B cell (primary cell): ENCODE measurements at regions of chr16 and their contacts with region 1.

Region 1: DNA sequence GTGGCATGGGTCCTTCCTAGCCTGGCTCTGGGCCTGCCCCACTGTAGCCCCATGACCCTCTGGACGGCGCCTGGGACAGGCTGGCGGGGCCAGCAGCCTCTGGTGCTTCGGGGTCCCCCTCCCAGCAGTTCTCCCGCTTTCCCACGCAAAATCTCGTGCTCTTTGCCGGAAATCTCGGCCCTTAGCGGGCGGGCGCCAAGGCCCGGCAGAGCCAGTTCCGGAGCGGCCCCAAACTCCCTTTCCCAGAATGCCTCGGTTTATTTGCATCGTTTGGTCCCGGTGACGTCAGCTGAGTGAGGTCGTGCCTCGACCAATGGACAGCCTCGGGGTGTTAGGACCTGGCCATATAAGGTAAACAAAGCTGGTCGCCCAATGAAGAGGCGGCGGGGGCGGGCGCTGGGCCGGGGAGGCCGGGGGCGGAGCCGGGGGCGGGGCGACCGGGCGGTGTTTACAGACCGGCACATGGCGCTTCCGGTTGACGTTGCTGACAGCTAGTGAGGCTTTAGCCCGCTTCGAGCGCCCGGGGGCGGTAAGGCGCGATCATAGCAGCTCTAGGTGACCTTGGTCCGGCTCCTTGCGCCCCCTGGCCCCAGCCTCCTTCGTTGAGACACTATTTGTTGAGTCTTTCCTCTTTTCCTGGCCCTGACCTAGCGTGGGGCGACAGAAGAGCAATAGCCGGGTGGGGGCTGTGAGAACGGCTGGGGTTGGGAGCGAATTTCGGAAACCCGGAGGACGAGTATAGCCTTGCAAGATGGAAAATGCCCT is 1.5 kb upstream of the UBALD1 start:
- DNase-seq: peak; percentile 99
- ATAC-seq: peak; percentile 84
- H3K4me3 ChIP-seq: peak overlapping the region; percentile 4 to 81 (median 55)
- H3K4me3 Mint-ChIP-seq: peak overlapping the region; percentile 92
- H3K27ac ChIP-seq: peak overlapping the region; percentile 86 to 96
- H3K27ac Mint-ChIP-seq: peak overlapping the region; percentile 92
- H3K4me1 ChIP-seq: peaks cover 28 to 39% of the 10 kb centered on the region in 2 donors
- H3K4me1 Mint-ChIP-seq: peaks cover 29% of the 10 kb centered on the region
- H3K27me3 ChIP-seq: no peaks in the 10 kb centered on the region
- H3K27me3 Mint-ChIP-seq: no peaks in the 10 kb centered on the region
- CTCF ChIP-seq: peak; percentile 64

Region 2: DNA sequence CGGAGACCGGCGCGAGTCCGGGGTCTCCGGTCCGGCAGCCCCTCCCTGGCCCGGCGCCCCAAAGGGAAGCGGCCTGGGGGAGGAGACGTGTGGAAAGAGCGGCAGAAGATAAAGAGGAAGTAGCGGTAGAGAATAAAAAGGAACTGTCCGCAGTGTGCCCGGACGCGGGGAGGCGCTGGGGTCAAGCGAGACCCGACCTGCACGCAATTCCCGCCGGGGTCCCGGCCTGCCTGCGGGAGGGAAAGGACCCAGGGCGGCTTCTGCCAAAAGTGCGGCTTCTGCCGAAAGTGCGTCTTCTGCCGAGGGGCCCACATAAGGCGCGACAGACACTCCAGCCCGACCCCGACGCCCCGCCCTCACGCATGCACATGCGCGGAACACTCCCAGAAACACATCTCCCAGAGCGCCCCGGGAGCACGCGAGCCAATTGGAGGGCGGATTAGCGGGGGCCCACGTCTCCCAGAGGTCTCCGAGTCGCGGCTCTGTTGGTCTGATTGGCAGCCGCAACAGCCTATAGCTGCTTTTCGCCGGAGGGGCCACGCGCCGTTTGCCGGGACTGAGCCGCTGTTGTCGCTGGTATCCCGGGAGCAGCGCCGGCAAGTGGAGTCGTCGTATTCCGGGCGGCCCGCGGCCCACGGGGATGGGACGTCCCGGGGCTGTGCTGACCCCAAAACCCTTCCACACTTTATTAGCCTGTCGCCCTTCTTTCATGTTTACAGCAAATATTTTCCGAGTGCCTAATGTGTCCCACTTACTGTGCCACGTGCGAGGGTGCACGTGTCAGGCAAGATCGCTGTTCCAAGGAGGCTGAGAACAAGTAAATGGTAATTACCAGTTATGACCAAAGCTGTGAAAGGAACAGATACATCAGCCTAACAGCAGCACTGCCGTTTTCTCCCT is 1351.8 kb before region 1 on chr16:
- CTCF ChIA-PET with region 1: no interaction called
- POLR2A ChIA-PET with region 1: no interaction called
- intact Hi-C with region 1: loop called (anchors 10 kb)
- DNase-seq: peak; percentile 97
- ATAC-seq: peak; percentile 86
- H3K4me3 ChIP-seq: peak overlapping the region; percentile 75 to 84 (median 78)
- H3K4me3 Mint-ChIP-seq: peak overlapping the region; percentile 92
- H3K27ac ChIP-seq: peak overlapping the region; percentile 85 to 86
- H3K27ac Mint-ChIP-seq: peak overlapping the region; percentile 95
- H3K4me1 ChIP-seq: peaks cover 9 to 18% of the 10 kb centered on the region in 2 donors
- H3K4me1 Mint-ChIP-seq: peaks cover 28% of the 10 kb centered on the region
- H3K27me3 ChIP-seq: no peaks in the 10 kb centered on the region
- H3K27me3 Mint-ChIP-seq: no peaks in the 10 kb centered on the region
- CTCF ChIP-seq: peak; percentile 54

Region 3: GRCh38 chr16:4116337-4117249 is 499.6 kb before region 1 on chr16 and contains the start of gene ADCY9:
- CTCF ChIA-PET with region 1: no interaction called
- POLR2A ChIA-PET with region 1: no interaction called
- intact Hi-C with region 1: loop called (anchors 10 kb)
- DNase-seq: peak; percentile 88
- ATAC-seq: peak; percentile 86
- H3K4me3 ChIP-seq: peak within 1 kb of the TSS in 4 of 5 experiments; percentile 46 to 75 (median 58)
- H3K4me3 Mint-ChIP-seq: peak within 1 kb of the TSS; percentile 91
- H3K27ac ChIP-seq: no peak within 1 kb of the TSS
- H3K27ac Mint-ChIP-seq: peak within 1 kb of the TSS; percentile 64
- H3K4me1 ChIP-seq: peaks cover 10 to 13% of the 10 kb centered on the region in 2 donors
- H3K4me1 Mint-ChIP-seq: peaks cover 18% of the 10 kb centered on the region
- H3K27me3 ChIP-seq: peaks cover 0 to 6% (median 0%) of the 10 kb centered on the region in 4 experiments
- H3K27me3 Mint-ChIP-seq: peaks cover 22% of the 10 kb centered on the region
- CTCF ChIP-seq: no peak
- total RNA-seq, gene ADCY9: 1.7 and 1.9 TPM in 2 replicates

Region 4: DNA sequence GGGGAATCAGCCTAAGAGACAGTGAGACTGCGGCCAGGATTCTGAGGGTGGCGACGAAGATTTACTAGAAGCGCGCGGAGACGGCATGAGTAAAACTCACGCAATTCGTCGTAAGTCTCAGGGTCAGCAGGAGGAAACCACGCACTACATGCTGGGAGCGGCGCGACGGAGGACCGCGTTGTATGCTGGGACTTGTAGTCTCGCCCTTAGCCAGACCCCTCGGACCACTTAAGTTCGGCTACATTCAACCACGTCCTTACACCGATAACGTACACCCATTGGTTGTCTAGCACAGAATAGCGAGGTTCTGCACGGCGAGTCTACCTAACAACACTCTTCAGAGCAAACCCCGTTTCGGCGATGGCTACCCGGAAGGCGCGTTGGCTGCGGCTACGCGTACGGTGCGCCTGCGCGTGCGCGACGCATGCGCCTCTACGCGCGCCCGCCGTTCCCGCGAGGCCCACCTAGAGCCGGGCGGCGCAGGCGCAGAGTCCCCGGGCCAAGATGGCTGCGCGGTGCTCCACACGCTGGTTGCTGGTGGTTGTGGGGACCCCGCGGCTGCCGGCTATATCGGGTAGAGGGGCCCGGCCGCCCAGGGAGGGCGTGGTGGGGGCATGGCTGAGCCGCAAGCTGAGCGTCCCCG is 190.7 kb before region 1 on chr16 and contains the start of gene DNAJA3:
- CTCF ChIA-PET with region 1: no interaction called
- POLR2A ChIA-PET with region 1: no interaction called
- intact Hi-C with region 1: loop called (anchors 1 kb)
- DNase-seq: peak; percentile 98
- ATAC-seq: peak; percentile 92
- H3K4me3 ChIP-seq: peak within 1 kb of the TSS; percentile 80 to 99 (median 89)
- H3K4me3 Mint-ChIP-seq: peak within 1 kb of the TSS; percentile 97
- H3K27ac ChIP-seq: peak within 1 kb of the TSS; percentile 93 to 96
- H3K27ac Mint-ChIP-seq: peak within 1 kb of the TSS; percentile 100
- H3K4me1 ChIP-seq: peaks cover 14 to 20% of the 10 kb centered on the region in 2 donors
- H3K4me1 Mint-ChIP-seq: peaks cover 25% of the 10 kb centered on the region
- H3K27me3 ChIP-seq: no peaks in the 10 kb centered on the region
- H3K27me3 Mint-ChIP-seq: no peaks in the 10 kb centered on the region
- CTCF ChIP-seq: no peak
- total RNA-seq, gene DNAJA3: 59.3 and 68.1 TPM in 2 replicates

Region 5: GRCh38 chr16:4538350-4539235 is 77.6 kb before region 1 on chr16 and contains the start of gene CDIP1:
- CTCF ChIA-PET with region 1: no interaction called
- POLR2A ChIA-PET with region 1: no interaction called
- intact Hi-C with region 1: loop called (anchors 1 kb)
- DNase-seq: peak; percentile 99
- ATAC-seq: peak; percentile 91
- H3K4me3 ChIP-seq: peak within 1 kb of the TSS; percentile 7 to 93 (median 73)
- H3K4me3 Mint-ChIP-seq: peak within 1 kb of the TSS; percentile 92
- H3K27ac ChIP-seq: peak within 1 kb of the TSS; percentile 87 to 95
- H3K27ac Mint-ChIP-seq: peak within 1 kb of the TSS; percentile 96
- H3K4me1 ChIP-seq: peaks cover 7 to 13% of the 10 kb centered on the region in 2 donors
- H3K4me1 Mint-ChIP-seq: peaks cover 14% of the 10 kb centered on the region
- H3K27me3 ChIP-seq: no peaks in the 10 kb centered on the region
- H3K27me3 Mint-ChIP-seq: no peaks in the 10 kb centered on the region
- CTCF ChIP-seq: peak; percentile 24
- total RNA-seq, gene CDIP1: 18.0 and 20.3 TPM in 2 replicates

Region 6: DNA sequence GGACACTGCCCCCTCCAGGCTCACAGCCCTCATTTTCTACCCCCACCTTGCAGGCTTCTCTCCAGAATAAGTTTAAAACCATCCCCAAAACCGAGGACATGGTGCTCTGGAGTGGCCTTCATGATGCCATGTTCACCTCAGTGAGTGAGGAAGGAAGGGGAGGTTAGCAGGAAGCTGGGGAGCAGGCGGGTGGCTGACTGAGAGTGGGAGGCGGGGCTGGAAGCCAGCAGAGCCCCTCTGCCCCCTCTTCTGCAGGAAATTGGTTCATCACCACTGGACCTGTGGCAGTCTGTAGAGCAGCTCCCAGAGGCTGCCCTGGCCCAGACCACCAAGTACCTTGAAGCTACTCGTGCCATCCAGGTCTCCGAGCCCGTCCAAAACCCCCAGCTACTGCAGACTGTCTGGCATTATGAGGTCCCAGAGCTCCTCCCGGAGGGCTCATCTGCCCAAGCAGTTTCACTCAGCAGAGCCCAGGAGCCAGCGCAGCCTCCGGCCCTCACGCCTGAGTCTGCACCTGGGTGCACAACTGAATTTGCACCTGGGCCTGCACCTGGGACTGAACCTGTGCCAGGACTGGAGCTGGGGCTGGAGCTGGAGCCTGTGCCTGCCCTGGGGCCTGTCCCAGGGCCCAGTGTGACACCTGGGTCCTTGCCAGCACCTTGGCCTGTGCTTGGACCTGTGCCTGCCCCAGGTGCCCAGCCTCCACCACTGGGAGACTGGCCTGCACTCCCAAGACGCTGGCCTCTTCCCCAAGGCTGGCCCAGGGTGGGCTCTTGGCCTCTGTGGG is 41.1 kb before region 1 on chr16:
- CTCF ChIA-PET with region 1: no interaction called
- POLR2A ChIA-PET with region 1: no interaction called
- intact Hi-C with region 1: no loop called
- DNase-seq: no peak
- ATAC-seq: no peak
- H3K4me3 ChIP-seq: no peak overlapping the region
- H3K4me3 Mint-ChIP-seq: no peak overlapping the region
- H3K27ac ChIP-seq: no peak overlapping the region
- H3K27ac Mint-ChIP-seq: no peak overlapping the region
- H3K4me1 ChIP-seq: no peaks in the 10 kb centered on the region
- H3K4me1 Mint-ChIP-seq: no peaks in the 10 kb centered on the region
- H3K27me3 ChIP-seq: no peaks in the 10 kb centered on the region
- H3K27me3 Mint-ChIP-seq: peaks cover 4% of the 10 kb centered on the region
- CTCF ChIP-seq: no peak

Region 7: DNA sequence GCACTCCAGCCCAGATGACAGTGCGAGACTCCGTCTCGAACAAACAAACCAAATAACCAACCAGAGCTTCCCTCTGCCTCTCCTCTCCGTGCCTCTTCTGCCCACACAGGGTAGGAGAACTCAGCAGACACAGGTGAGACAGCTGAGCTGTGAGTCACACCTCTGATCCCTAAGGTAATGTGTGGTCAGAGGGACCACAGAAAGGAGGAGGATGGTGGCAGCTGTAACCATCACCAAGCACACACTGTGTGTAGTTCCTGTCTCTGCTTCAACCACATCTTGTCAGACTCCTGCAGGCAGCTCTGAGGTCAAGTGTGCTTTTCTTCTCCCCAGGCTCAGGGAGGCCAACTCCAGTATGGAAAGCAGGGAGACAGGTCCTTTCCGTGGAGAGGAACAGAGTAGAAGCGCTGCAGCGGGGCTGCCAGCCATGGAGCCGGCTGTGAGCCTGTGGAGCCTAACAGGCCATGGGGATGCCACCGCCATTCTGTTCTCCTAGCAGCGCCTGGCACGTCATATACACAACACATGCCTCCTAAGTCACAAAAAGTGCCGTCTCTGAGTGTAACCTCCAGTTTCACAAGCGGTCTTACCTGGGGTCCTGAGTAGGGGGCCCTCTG is 84.3 kb after region 1 on chr16:
- CTCF ChIA-PET with region 1: no interaction called
- POLR2A ChIA-PET with region 1: no interaction called
- intact Hi-C with region 1: no loop called
- DNase-seq: peak; percentile 9
- ATAC-seq: no peak
- H3K4me3 ChIP-seq: no peak overlapping the region
- H3K4me3 Mint-ChIP-seq: no peak overlapping the region
- H3K27ac ChIP-seq: no peak overlapping the region
- H3K27ac Mint-ChIP-seq: no peak overlapping the region
- H3K4me1 ChIP-seq: no peaks in the 10 kb centered on the region
- H3K4me1 Mint-ChIP-seq: peaks cover under 1% of the 10 kb centered on the region
- H3K27me3 ChIP-seq: no peaks in the 10 kb centered on the region
- H3K27me3 Mint-ChIP-seq: no peaks in the 10 kb centered on the region
- CTCF ChIP-seq: no peak

Region 8: DNA sequence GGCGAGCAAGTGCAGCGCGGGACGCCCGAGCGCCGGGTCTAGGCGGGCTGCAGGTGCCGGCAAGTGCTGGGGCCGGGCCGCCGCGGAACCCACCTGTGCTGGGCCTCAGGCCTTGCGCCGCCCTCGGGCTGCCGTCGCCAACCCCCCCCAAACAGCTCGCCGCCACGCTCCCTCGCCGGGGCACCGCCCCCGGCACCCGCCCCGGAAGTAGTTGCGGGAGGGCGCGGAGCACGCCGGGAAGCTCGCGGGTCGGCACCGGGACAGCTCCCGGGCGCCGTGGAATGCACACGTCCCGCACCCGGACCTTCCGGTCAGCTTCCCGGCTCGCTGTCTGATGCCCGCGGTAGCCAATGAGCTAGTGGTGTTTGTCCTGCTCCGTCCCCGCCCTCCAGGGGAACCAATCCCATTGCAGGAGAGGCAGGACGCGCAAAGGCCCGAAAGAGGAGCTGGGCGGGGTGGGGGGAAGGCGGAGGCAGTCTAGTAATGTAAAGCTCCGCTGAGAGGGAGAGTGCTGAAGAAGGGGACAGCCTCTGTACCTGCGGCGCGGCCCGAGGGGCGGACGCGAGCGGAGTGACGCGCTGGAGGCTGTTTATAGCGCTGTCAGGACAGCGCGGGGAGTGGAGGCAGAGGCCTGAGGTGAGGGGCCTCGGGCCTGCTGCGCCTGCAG is 118.0 kb after region 1 on chr16 and contains the starts of genes ANKS3 and DNAAF8:
- CTCF ChIA-PET with region 1: interaction called, 13 read pairs
- POLR2A ChIA-PET with region 1: interaction called, 4 read pairs
- intact Hi-C with region 1: loop called (anchors 1 kb)
- DNase-seq: peak; percentile 89
- ATAC-seq: peak; percentile 80
- H3K4me3 ChIP-seq: peak within 1 kb of the TSS; percentile 79 to 98 (median 91)
- H3K4me3 Mint-ChIP-seq: peak within 1 kb of the TSS; percentile 90
- H3K27ac ChIP-seq: peak within 1 kb of the TSS; percentile 35 to 89
- H3K27ac Mint-ChIP-seq: peak within 1 kb of the TSS; percentile 89
- H3K4me1 ChIP-seq: peaks cover 10 to 13% of the 10 kb centered on the region in 2 donors
- H3K4me1 Mint-ChIP-seq: peaks cover 17% of the 10 kb centered on the region
- H3K27me3 ChIP-seq: no peaks in the 10 kb centered on the region
- H3K27me3 Mint-ChIP-seq: no peaks in the 10 kb centered on the region
- CTCF ChIP-seq: no peak
- total RNA-seq, gene ANKS3: 31.9 and 36.2 TPM in 2 replicates
- total RNA-seq, gene DNAAF8: 0.19 and 0.44 TPM in 2 replicates

Region 9: DNA sequence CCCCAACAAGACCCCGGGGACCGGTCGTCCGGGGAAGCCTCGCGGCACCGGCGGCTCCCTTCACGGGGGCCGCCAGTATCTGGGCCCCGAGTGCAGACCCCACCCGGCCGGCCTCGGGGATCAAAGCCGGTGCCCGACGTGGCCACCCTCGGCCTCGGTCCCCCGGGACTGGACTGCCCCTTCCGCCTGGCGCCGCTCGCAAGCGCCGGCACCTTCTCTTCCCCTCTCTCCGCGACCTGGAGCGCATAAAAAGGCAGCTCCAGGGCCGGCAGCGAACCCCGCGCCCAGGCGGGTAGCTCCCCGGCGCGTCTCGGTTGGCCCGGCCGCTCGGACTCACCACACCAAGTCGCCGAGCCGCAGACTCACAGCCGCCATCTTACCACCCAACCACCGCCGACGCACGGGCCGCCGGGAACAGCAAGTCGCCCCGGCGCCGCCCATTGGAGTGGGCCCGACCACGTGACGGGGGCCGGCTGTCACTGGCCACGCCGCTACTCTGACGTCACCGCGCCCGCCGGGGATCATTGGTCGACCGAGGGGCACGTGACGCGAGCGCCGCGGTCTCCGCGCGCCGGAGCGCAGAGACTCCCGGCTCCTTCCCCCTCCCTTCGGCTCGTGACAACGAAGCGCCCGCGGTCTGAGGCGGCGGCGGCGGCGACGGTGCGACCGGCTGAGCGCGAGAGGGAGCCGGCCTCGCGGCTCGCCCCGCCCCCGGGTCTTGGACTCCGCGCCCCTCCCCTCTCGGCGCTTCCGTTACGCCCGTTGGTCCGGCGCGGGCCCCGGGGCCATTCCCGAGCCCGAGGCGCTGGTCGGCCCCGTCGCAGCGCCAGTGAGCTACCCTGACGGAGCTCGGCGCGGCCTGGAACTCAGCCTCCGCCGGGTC is 230.9 kb after region 1 on chr16 and contains the starts of genes GLYR1 and UBN1:
- CTCF ChIA-PET with region 1: no interaction called
- POLR2A ChIA-PET with region 1: no interaction called
- intact Hi-C with region 1: loop called (anchors 1 kb)
- DNase-seq: peak; percentile 99
- ATAC-seq: peak; percentile 86
- H3K4me3 ChIP-seq: peak within 1 kb of the TSS; percentile 69 to 96 (median 87)
- H3K4me3 Mint-ChIP-seq: peak within 1 kb of the TSS; percentile 93
- H3K27ac ChIP-seq: peak within 1 kb of the TSS; percentile 80 to 97
- H3K27ac Mint-ChIP-seq: peak within 1 kb of the TSS; percentile 96
- H3K4me1 ChIP-seq: peaks cover 27 to 31% of the 10 kb centered on the region in 2 donors
- H3K4me1 Mint-ChIP-seq: peaks cover 34% of the 10 kb centered on the region
- H3K27me3 ChIP-seq: no peaks in the 10 kb centered on the region
- H3K27me3 Mint-ChIP-seq: no peaks in the 10 kb centered on the region
- CTCF ChIP-seq: no peak
- total RNA-seq, gene GLYR1: 137 and 147 TPM in 2 replicates
- total RNA-seq, gene UBN1: 38.1 and 41.9 TPM in 2 replicates